Activated CD4-positive, alpha-beta T cell treated with anti-CD3 and anti-CD28 coated beads for 36 hours (primary cell): ENCODE measurements at regions of chr17 and their contacts with region 1.

Region 1: DNA sequence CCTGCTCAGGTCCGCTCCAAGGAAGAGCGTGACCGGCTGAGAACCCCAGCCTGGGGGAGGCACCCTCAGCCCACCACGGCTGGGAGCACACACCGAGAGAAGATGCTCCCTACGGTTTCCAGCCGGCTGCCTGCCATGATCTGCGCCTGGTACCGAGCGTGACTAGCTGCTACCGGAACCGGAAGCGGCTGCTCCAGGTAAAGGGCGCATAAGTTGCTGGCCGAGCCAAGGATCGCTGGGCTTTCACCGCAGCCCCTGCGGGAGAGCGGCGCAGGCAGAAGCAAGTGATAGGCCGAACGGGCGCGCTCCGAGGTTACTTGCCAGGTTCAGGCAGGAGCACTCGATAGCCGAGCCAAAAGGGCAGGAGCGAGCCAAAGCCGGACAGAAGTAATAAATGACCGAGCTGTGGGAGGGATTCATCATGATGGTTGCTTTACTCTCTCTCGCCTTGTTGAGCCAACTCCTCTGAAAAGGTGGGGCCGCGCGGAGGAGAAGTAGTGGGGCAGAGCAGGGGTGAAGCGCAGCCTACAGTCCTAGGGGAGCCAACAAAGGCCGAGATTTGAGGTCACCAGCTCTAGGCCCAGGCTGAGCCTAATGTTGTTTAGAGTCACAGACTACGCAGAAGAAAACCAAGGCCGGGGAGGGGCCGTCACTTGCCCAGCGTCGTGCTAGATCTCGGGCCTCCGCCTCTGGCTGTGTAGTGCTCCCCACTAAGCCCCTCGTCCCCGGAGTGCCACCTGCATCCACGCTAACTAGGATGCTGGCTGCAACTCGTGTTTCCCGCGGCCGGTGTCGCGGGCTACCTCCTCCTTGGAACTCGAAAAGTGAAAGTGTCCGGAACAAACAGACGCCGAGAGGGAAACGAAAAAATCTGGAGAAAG is at the start of gene MRPS23:
- DNase-seq: peak; percentile 99
- ATAC-seq: peak; percentile 91
- H3K4me3 Mint-ChIP-seq: peak within 1 kb of the TSS; percentile 98
- H3K27ac Mint-ChIP-seq: peak within 1 kb of the TSS; percentile 95
- H3K4me1 Mint-ChIP-seq: peaks cover 30% of the 10 kb centered on the region
- H3K27me3 Mint-ChIP-seq: no peaks in the 10 kb centered on the region
- total RNA-seq, gene MRPS23: 42.6 to 69.7 TPM

Region 2: DNA sequence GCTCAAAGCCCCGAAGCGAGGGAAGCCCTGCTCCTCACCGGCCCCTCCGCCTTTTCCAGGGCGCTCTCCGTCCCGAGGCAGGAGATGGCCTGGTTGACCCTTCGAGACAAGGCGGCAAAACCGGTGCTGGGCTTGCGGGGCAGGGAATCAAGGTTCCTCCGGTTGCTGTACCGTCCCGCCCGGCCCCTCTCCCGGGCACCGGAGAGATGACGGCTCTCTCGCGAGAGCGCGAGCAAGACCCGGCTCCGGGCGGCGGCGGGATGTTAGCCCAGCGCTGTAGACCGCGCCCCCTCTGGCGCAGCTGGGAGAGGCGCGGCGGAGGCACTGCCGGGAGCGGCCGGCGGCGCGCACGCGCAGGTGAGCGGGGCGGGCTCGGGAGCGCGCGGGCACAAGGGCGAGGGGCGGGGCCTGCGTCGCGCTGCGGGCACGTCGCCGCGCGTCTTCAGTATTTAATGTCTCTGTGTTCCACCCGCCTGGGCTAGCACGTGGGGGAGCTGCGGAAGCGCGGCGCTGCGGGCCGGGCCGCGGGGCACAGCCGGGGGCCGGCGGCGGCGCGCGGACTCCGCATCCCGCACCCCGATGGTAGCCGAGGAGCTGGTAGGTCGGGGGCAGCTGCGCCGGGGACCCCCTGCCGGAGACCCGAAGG is 765.2 kb before region 1 on chr17 and contains the start of gene AKAP1:
- CTCF ChIA-PET with region 1: no interaction called
- POLR2A ChIA-PET with region 1: no interaction called
- intact Hi-C with region 1: loop called (anchors 1 kb)
- DNase-seq: peak; percentile 97
- ATAC-seq: peak; percentile 96
- H3K4me3 Mint-ChIP-seq: peak within 1 kb of the TSS; percentile 81
- H3K27ac Mint-ChIP-seq: peak within 1 kb of the TSS; percentile 87
- H3K4me1 Mint-ChIP-seq: peaks cover 44% of the 10 kb centered on the region
- H3K27me3 Mint-ChIP-seq: no peaks in the 10 kb centered on the region
- total RNA-seq, gene AKAP1: 27.0 to 29.8 TPM

Region 3: DNA sequence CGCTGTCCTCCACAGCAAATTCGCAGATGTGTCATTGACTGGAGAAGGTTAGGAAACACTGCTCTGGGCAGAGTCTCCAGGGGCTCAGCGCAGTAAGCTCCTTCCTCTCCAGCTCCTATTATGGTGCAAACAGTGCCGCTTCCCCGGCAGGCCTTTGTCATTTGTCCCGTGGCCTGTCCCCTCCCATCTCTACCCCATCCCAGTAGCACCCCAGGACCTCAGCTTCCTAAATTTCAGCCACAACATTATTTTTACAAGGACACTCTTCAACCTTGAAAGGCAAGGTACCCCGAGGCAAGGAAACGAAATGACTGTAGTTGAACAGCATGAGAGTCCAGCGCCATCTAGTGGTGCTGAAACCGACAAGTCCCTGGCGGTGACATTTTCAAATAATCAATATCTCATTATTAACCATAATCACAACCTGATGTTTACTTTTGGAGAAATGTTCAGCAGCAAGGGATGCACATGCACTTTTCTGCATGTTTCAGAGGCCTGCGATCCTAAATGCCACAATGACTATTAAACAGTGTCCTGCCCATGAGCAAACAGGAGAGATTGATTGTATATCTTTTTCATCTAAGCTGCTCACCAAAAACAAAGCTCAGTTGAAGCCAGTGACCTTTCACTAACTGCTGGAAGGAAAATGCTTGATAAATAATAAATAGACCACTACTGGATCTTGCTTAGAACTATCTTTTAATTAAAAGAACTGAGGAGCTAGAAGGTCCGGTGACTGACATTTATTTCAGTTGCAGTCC is 16.8 kb before region 1 on chr17:
- CTCF ChIA-PET with region 1: interaction called, 41 read pairs
- POLR2A ChIA-PET with region 1: no interaction called
- intact Hi-C with region 1: no loop called
- DNase-seq: peak; percentile 84
- ATAC-seq: peak; percentile 86
- H3K4me3 Mint-ChIP-seq: no peak overlapping the region
- H3K27ac Mint-ChIP-seq: no peak overlapping the region
- H3K4me1 Mint-ChIP-seq: peaks cover 7% of the 10 kb centered on the region
- H3K27me3 Mint-ChIP-seq: no peaks in the 10 kb centered on the region

Region 4: GRCh38 chr17:57955183-57955931 is 105.2 kb after region 1 on chr17 and contains the start of gene CUEDC1:
- CTCF ChIA-PET with region 1: interaction called, 3 read pairs
- POLR2A ChIA-PET with region 1: no interaction called
- intact Hi-C with region 1: loop called in 1 of 2 experiments (anchors 1 kb)
- DNase-seq: peak; percentile 82
- ATAC-seq: peak; percentile 85
- H3K4me3 Mint-ChIP-seq: peak within 1 kb of the TSS; percentile 56
- H3K27ac Mint-ChIP-seq: no peak within 1 kb of the TSS
- H3K4me1 Mint-ChIP-seq: peaks cover 23% of the 10 kb centered on the region
- H3K27me3 Mint-ChIP-seq: peaks cover 33% of the 10 kb centered on the region
- total RNA-seq, gene CUEDC1: 0.14 TPM in 1 of 2 experiments, not detected in the other

Region 5: DNA sequence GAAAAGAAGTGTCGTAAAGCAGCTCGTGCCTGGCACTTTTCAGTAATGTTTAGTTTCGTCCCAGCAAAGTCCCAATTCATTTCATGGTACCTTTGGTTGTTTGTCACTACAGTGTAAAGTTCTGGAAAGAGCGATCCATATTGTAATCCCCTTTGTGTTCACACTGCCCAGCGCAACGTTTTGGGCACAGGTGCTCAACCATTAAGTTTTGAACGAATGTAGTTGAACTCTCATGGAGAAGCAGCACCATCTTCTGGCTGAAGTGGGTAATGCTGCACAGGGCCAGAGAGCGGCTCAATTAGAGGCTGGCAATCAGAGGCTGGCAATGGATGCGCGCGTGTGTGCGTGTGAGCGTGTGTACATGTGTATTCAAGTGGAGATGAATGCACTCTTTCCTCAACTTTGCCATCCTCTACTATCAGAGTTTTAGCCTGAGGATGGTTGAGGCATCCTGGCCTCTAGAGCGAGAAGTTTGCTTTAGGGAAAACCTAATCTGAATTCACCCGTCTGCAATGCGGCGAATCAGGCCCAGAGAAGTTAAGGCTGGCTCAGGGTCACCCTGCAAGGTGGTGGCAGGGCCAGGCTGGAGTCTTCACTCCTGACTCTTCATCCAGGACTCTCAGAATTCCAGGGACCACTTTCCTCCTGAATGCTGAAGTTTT is 263.0 kb after region 1 on chr17:
- CTCF ChIA-PET with region 1: interaction called, 71 read pairs
- POLR2A ChIA-PET with region 1: no interaction called
- intact Hi-C with region 1: loop called in 1 of 2 experiments (anchors 2 kb)
- DNase-seq: peak; percentile 91
- ATAC-seq: peak; percentile 96
- H3K4me3 Mint-ChIP-seq: no peak overlapping the region
- H3K27ac Mint-ChIP-seq: no peak overlapping the region
- H3K4me1 Mint-ChIP-seq: no peaks in the 10 kb centered on the region
- H3K27me3 Mint-ChIP-seq: peaks cover 5% of the 10 kb centered on the region

Region 6: GRCh38 chr17:58219001-58219788 is 369.1 kb after region 1 on chr17 and contains the start of gene MKS1:
- CTCF ChIA-PET with region 1: no interaction called
- POLR2A ChIA-PET with region 1: no interaction called
- intact Hi-C with region 1: loop called in 1 of 2 experiments (anchors 1 kb)
- DNase-seq: peak; percentile 98
- ATAC-seq: peak; percentile 100
- H3K4me3 Mint-ChIP-seq: peak within 1 kb of the TSS; percentile 90
- H3K27ac Mint-ChIP-seq: peak within 1 kb of the TSS; percentile 86
- H3K4me1 Mint-ChIP-seq: peaks cover 22% of the 10 kb centered on the region
- H3K27me3 Mint-ChIP-seq: peaks cover 2% of the 10 kb centered on the region
- total RNA-seq, gene MKS1: 20.4 to 22.5 TPM

Region 7: GRCh38 chr17:58870753-58871152 is 1020.6 kb after region 1 on chr17:
- CTCF ChIA-PET with region 1: no interaction called
- POLR2A ChIA-PET with region 1: no interaction called
- intact Hi-C with region 1: no loop called
- DNase-seq: no peak
- ATAC-seq: no peak
- H3K4me3 Mint-ChIP-seq: no peak overlapping the region
- H3K27ac Mint-ChIP-seq: no peak overlapping the region
- H3K4me1 Mint-ChIP-seq: peaks cover 7% of the 10 kb centered on the region
- H3K27me3 Mint-ChIP-seq: peaks cover 9% of the 10 kb centered on the region